ENCODE measurements at regions of chr19 and their contacts with region 1.

Region 1: GRCh38 chr19:19488875-19489690 is 26.3 kb downstream of the TSSK6 start:
- DNase-seq: peak; percentile 63 to 97 (median 94)
- ATAC-seq: peak; percentile 90
- H3K4me3 ChIP-seq: peak overlapping the region; percentile 22
- H3K4me3 Mint-ChIP-seq: peak overlapping the region; percentile 58 to 84 (median 78)
- H3K27ac ChIP-seq: peak overlapping the region; percentile 81
- H3K27ac Mint-ChIP-seq: peak overlapping the region; percentile 96 to 99 (median 99)
- H3K4me1 ChIP-seq: peaks cover 33 to 51% of the 10 kb centered on the region in 2 donors
- H3K4me1 Mint-ChIP-seq: peaks cover 27 to 61% (median 52%) of the 10 kb centered on the region in 7 donors
- H3K27me3 ChIP-seq: no peaks in the 10 kb centered on the region
- H3K27me3 Mint-ChIP-seq: no peaks in the 10 kb centered on the region

Region 2: GRCh38 chr19:19185853-19186740 is 303.0 kb before region 1 on chr19:
- CTCF ChIA-PET with region 1: interaction called, 4 read pairs
- POLR2A ChIA-PET with region 1: no interaction called
- intact Hi-C with region 1: loop called in 1 of 2 experiments (anchors 2 kb)
- DNase-seq: peak; percentile 29 to 70 (median 58)
- ATAC-seq: peak; percentile 86
- H3K4me3 ChIP-seq: no peak overlapping the region
- H3K4me3 Mint-ChIP-seq: no peak overlapping the region
- H3K27ac ChIP-seq: no peak overlapping the region
- H3K27ac Mint-ChIP-seq: peak overlapping the region in 6 of 9 donors; percentile 22 to 74 (median 62)
- H3K4me1 ChIP-seq: peaks cover 12 to 20% of the 10 kb centered on the region in 2 donors
- H3K4me1 Mint-ChIP-seq: peaks cover 20 to 43% (median 30%) of the 10 kb centered on the region in 7 donors
- H3K27me3 ChIP-seq: no peaks in the 10 kb centered on the region
- H3K27me3 Mint-ChIP-seq: no peaks in the 10 kb centered on the region

Region 3: GRCh38 chr19:19361075-19361594 is 127.9 kb before region 1 on chr19:
- CTCF ChIA-PET with region 1: interaction called, 94 read pairs
- POLR2A ChIA-PET with region 1: interaction called, 101 read pairs
- intact Hi-C with region 1: no loop called
- DNase-seq: peak; percentile 40 to 70 (median 57)
- ATAC-seq: peak; percentile 79
- H3K4me3 ChIP-seq: no peak overlapping the region
- H3K4me3 Mint-ChIP-seq: peak overlapping the region in 8 of 10 donors; percentile 7 to 73 (median 54)
- H3K27ac ChIP-seq: no peak overlapping the region
- H3K27ac Mint-ChIP-seq: peak overlapping the region in 8 of 9 donors; percentile 5 to 78 (median 68)
- H3K4me1 ChIP-seq: peaks cover 15 to 21% of the 10 kb centered on the region in 2 donors
- H3K4me1 Mint-ChIP-seq: peaks cover 18 to 51% (median 35%) of the 10 kb centered on the region in 7 donors
- H3K27me3 ChIP-seq: no peaks in the 10 kb centered on the region
- H3K27me3 Mint-ChIP-seq: no peaks in the 10 kb centered on the region

Region 4: DNA sequence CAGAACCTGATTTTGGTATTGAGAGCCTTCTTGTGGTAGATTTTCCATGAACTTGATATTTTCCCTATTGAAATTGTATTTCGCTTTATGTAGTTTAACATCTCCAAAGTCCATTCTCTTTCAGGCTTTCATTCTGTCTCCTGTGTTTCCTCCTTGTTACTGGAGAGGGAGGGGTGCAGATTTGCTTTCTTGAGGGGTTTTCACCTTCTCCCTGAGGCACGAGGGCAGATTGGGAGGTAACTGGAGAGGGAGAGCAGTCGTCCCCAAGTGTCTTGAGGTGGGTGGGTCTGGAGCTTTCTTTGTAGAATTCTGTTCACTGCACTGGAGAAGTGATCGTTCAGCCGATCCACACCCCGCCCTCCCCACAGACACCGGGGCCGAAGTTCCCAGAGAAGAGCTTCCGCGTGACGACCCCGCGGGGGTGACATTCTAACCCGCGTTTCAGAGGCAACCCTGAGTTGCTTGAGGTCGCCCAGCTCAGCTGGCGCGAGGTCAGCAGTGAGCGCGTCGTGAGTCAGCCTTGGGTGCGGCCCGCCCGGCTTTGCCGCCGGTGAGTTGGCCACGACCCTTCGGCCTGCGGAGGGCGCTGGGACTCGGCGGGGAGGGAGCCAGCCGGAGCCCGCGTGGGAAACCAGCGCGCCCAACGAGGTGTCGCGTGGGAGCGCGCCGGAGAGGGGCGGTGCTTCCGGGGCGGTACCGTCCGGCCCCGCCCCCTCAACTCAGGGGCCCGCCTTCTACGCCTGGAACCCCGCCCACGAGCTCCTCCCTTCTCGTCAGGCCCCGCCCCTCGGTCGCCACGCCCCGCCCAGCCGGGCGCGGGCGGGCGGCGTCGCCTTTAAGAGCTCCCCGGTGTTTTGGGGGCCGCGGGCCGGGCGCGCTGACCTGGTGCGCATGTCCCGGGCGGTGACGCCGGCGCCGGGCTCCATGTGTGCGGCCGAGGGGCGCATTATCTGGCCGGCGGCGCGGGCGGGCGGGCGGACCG is 83.9 kb before region 1 on chr19 and contains the start of gene GATAD2A:
- CTCF ChIA-PET with region 1: interaction called, 15 read pairs
- POLR2A ChIA-PET with region 1: interaction called, 36 read pairs
- intact Hi-C with region 1: loop called (anchors 1 kb)
- DNase-seq: peak; percentile 85 to 99 (median 90)
- ATAC-seq: peak; percentile 96
- H3K4me3 ChIP-seq: peak within 1 kb of the TSS; percentile 65
- H3K4me3 Mint-ChIP-seq: peak within 1 kb of the TSS; percentile 89 to 97 (median 94)
- H3K27ac ChIP-seq: peak within 1 kb of the TSS; percentile 86
- H3K27ac Mint-ChIP-seq: peak within 1 kb of the TSS; percentile 86 to 98 (median 92)
- H3K4me1 ChIP-seq: peaks cover 26 to 38% of the 10 kb centered on the region in 2 donors
- H3K4me1 Mint-ChIP-seq: peaks cover 37 to 70% (median 66%) of the 10 kb centered on the region in 7 donors
- H3K27me3 ChIP-seq: no peaks in the 10 kb centered on the region
- H3K27me3 Mint-ChIP-seq: no peaks in the 10 kb centered on the region
- total RNA-seq, gene GATAD2A: 97.9 to 123 (median 116) TPM

Region 5: GRCh38 chr19:19459707-19460251 is 29.3 kb before region 1 on chr19:
- CTCF ChIA-PET with region 1: interaction called, 7 read pairs
- POLR2A ChIA-PET with region 1: interaction called, 35 read pairs
- intact Hi-C with region 1: loop called (anchors 1 kb)
- DNase-seq: peak in 8 of 9 donors; percentile 49 to 75 (median 61)
- ATAC-seq: peak; percentile 72
- H3K4me3 ChIP-seq: peak overlapping the region; percentile 55
- H3K4me3 Mint-ChIP-seq: peak overlapping the region; percentile 85 to 92 (median 91)
- H3K27ac ChIP-seq: peak overlapping the region; percentile 82
- H3K27ac Mint-ChIP-seq: peak overlapping the region; percentile 94 to 99 (median 98)
- H3K4me1 ChIP-seq: peaks cover 82% of the 10 kb centered on the region in 2 donors
- H3K4me1 Mint-ChIP-seq: peaks cover 63 to 84% (median 72%) of the 10 kb centered on the region in 7 donors
- H3K27me3 ChIP-seq: no peaks in the 10 kb centered on the region
- H3K27me3 Mint-ChIP-seq: no peaks in the 10 kb centered on the region